HepG2 (cell line): ENCODE measurements at regions of chr2 and their contacts with region 1.

Region 1: GRCh38 chr2:43484323-43484930 is 111.4 kb downstream of the THADA start:
- DNase-seq: peak; percentile 85
- ATAC-seq: no peak
- H3K4me3 ChIP-seq: no peak overlapping the region
- H3K27ac ChIP-seq: no peak overlapping the region
- H3K4me1 ChIP-seq: peaks cover 15% of the 10 kb centered on the region; the same call in 1 of the 2 replicates
- H3K27me3 ChIP-seq: no peaks in the 10 kb centered on the region
- CTCF ChIP-seq: peak; percentile 79
- EP300 ChIP-seq: no peak
- POLR2A ChIP-seq: no peak
- RAD21 ChIP-seq: peak; percentile 84

Region 2: DNA sequence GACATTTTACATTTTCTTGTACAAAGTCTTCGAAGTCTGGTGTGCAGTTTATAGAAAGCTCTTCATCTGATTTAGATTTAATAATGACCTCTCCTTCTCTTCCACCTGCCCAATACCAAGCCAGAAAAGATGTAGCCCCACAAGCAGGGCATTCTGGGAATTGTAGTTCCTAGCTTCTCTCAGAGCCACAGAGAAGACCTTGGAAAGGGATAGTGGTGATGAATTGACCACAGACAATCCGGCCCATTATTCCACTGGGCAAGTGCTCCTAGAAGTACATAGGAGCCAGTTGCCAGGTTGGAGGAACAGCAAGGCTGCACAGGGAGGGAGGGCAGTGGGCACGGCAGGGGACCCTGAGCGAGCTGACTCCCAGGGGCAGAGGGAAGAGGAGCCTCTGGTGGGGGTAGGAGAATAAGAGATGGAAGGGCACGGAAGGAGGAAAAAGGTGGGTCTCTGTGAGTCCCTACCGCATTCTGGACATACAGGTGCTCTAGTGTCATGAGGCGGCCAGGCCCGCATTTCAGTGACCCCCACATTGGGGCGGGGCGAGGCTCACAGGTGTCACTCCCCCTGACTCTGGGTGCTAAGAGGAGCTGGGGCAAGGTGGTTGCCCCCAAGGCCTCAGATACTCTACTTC is 539.5 kb before region 1 on chr2:
- CTCF ChIA-PET with region 1: interaction called, 5 read pairs
- POLR2A ChIA-PET with region 1: no interaction called
- in situ Hi-C with region 1: loop called (anchors 5 kb)
- intact Hi-C with region 1: loop called (anchors 1 kb)
- DNase-seq: peak; percentile 59
- ATAC-seq: 0 out of 3 replicates have a peak, but pooled peaks have one; percentile 4
- H3K4me3 ChIP-seq: no peak overlapping the region
- H3K27ac ChIP-seq: no peak overlapping the region
- H3K4me1 ChIP-seq: peaks cover 95% of the 10 kb centered on the region
- H3K27me3 ChIP-seq: no peaks in the 10 kb centered on the region
- CTCF ChIP-seq: no peak
- EP300 ChIP-seq: no peak
- POLR2A ChIP-seq: no peak
- RAD21 ChIP-seq: no peak

Region 3: DNA sequence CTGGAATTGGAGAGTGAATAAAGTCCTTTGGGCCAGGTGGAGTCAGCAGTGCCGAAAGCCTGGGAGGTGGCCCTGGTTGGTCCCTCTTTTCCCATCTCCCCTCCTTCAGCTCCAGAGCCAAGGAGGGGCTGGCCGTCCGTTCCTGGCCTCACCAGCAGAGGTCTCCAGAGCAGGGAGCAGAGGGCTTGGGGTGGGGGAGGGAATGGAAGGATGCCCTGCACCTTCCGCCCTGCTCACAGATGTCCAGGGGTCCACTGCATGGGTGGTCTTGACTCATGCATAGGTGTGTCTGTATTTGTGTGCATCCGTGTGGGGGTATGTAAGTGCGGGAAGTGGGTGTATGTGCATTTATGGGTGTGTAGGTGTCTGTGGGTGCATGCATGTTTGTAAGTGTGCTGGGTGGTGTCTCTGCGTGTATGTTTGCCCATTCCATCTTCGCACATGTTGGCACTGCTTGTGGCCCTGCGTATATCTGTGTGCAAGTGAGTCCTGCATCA is 459.9 kb before region 1 on chr2:
- CTCF ChIA-PET with region 1: interaction called, 7 read pairs
- POLR2A ChIA-PET with region 1: no interaction called
- in situ Hi-C with region 1: loop called (anchors 10 kb)
- intact Hi-C with region 1: loop called (anchors 5 kb)
- DNase-seq: no peak
- ATAC-seq: peak; percentile 83
- H3K4me3 ChIP-seq: no peak overlapping the region
- H3K27ac ChIP-seq: no peak overlapping the region
- H3K4me1 ChIP-seq: peaks cover 60% of the 10 kb centered on the region
- H3K27me3 ChIP-seq: no peaks in the 10 kb centered on the region
- CTCF ChIP-seq: peak; percentile 98
- EP300 ChIP-seq: peak in 1 of 2 experiments; percentile 19; a peak in 1 of 4 replicates
- POLR2A ChIP-seq: no peak
- RAD21 ChIP-seq: peak; percentile 94

Region 4: DNA sequence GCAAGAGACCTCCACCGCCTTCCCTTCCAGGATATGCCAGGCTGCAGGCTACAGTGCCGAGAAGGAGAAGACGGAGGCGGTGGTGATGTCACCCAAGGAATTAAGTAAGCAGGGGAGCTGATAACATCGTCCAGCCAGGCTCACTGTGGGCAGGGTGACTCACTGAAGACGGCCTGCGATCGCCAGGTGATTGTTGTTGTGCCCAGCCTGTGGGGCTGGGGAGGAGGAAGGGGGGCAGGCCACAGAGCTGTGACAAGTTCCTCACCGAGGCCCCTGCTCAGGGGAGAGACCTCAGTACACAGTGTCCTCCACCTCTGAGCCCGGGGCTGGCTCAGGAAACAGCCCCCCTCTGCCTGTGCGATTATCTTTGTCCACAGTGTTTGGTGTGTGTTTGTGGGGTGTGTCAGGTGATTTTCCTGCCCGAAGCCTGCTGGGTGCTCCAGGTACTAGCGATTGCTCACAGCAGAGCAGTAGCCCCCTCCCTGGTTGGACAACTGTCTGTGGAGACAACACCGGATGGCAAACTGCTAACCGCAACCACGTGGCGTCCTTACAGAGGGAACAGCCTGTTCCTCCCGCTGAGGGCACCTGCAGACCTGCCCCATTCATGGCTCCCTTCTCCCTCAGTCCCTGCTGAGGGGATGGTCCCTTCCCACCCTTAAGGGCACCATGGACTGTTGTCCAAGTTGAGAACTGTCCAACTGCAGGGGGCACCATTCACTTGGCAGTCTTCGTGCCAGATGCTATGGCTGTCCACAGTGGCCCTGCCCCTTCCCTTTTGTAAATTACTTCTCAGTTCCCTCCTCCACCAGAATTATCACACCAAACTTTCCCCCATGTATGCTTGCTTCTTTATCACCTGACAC is 353.2 kb before region 1 on chr2:
- CTCF ChIA-PET with region 1: interaction called, 5 read pairs
- POLR2A ChIA-PET with region 1: no interaction called
- in situ Hi-C with region 1: loop called (anchors 5 kb)
- intact Hi-C with region 1: loop called (anchors 1 kb)
- DNase-seq: peak; percentile 80
- ATAC-seq: peak; percentile 68
- H3K4me3 ChIP-seq: peak overlapping the region in 1 of 3 experiments; percentile 34; a peak in 2 of 6 replicates
- H3K27ac ChIP-seq: peak overlapping the region; percentile 11
- H3K4me1 ChIP-seq: peaks cover 86% of the 10 kb centered on the region
- H3K27me3 ChIP-seq: no peaks in the 10 kb centered on the region
- CTCF ChIP-seq: peak; percentile 96
- EP300 ChIP-seq: peak in 1 of 2 experiments; percentile 15; a peak in 1 of 4 replicates
- POLR2A ChIP-seq: no peak
- RAD21 ChIP-seq: peak; percentile 97

Region 5: DNA sequence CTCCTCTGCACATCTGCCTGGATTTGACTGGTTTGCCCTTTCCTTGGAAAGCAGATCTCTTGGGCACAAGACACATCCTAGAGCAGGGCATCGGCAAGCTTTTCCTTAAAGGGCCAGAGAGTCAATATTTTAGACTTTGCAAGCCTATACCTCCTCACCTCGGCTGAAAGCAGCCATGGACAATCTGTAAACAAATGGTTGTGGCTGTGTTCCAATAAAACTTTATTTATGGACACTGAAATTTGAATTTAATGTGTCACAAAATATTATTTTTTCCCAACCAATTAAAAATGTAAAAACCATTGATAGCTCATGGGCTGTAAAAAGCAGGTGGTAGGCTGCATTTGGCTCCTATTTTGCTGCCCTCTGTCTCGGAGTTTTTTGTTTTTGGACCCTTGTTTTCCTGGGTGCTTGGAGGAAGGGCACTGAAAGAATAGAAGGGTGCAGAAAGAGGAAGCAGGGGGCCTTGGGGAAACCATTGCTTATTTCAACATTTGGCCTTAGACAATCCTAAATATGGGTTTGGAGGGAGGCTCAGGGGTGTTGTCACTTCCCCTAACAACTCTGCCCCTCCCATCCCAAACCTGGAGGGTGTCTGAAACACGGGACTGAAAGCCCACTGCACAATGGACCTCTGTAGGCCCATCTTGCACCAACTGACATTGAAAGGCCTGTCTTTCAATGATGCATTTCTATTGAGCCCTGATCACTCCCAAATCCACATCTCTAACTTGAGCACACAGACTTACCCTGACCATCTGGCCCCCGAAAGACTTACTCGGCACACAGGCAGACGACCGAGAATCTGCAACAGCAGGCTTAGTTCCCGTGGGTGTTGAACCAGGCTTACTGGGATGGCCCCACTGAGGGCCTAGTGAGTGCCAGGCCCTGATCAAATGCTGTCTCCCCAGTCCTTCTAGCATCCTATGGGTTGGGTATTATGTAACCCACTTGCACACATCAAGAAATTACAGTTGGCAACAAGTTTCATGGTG is 250.9 kb before region 1 on chr2:
- CTCF ChIA-PET with region 1: interaction called, 17 read pairs
- POLR2A ChIA-PET with region 1: no interaction called
- in situ Hi-C with region 1: loop called (anchors 5 kb)
- intact Hi-C with region 1: loop called (anchors 1 kb)
- DNase-seq: no peak
- ATAC-seq: no peak
- H3K4me3 ChIP-seq: no peak overlapping the region
- H3K27ac ChIP-seq: no peak overlapping the region
- H3K4me1 ChIP-seq: peaks cover 36% of the 10 kb centered on the region
- H3K27me3 ChIP-seq: no peaks in the 10 kb centered on the region
- CTCF ChIP-seq: no peak
- EP300 ChIP-seq: no peak
- POLR2A ChIP-seq: no peak
- RAD21 ChIP-seq: no peak

Region 6: DNA sequence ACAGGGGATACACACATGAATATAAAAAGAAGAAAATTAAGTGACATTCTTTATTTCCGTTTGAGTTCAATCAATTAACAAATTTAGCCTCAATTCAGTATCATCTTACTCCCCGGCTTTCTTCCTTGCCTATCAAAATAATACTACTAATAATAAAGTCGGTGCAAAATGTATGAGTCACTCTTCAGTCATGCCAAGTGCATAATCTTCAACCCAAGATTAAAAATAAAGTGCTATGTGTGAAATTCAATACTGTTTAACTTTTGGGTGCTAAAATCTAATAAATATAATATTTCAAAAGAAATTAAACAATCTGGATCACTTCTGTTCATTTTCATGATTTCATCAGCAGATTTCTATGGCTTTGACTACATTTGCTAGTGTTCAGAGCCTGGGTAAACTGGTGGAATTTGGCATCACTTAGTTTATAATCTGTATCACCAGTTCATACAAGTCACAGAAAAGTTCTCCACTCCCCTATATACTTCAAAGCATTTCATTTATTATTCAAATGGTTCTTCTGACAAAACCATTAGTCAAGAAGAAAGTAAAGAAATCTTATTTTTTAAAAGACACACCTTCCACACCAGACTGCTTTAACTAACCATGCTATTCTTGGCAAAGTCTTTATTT is 72.2 kb before region 1 on chr2:
- CTCF ChIA-PET with region 1: no interaction called
- POLR2A ChIA-PET with region 1: no interaction called
- in situ Hi-C with region 1: no loop called
- intact Hi-C with region 1: no loop called
- DNase-seq: no peak
- ATAC-seq: no peak
- H3K4me3 ChIP-seq: no peak overlapping the region
- H3K27ac ChIP-seq: no peak overlapping the region
- H3K4me1 ChIP-seq: peaks cover 39% of the 10 kb centered on the region
- H3K27me3 ChIP-seq: no peaks in the 10 kb centered on the region
- CTCF ChIP-seq: no peak
- EP300 ChIP-seq: no peak
- POLR2A ChIP-seq: no peak
- RAD21 ChIP-seq: no peak

Region 7: GRCh38 chr2:43438858-43439655 is 45.4 kb before region 1 on chr2:
- CTCF ChIA-PET with region 1: no interaction called
- POLR2A ChIA-PET with region 1: no interaction called
- in situ Hi-C with region 1: no loop called
- intact Hi-C with region 1: no loop called
- DNase-seq: no peak
- ATAC-seq: no peak
- H3K4me3 ChIP-seq: no peak overlapping the region
- H3K27ac ChIP-seq: no peak overlapping the region
- H3K4me1 ChIP-seq: peaks cover 33% of the 10 kb centered on the region
- H3K27me3 ChIP-seq: no peaks in the 10 kb centered on the region
- CTCF ChIP-seq: no peak
- EP300 ChIP-seq: no peak
- POLR2A ChIP-seq: no peak
- RAD21 ChIP-seq: no peak

Region 8: DNA sequence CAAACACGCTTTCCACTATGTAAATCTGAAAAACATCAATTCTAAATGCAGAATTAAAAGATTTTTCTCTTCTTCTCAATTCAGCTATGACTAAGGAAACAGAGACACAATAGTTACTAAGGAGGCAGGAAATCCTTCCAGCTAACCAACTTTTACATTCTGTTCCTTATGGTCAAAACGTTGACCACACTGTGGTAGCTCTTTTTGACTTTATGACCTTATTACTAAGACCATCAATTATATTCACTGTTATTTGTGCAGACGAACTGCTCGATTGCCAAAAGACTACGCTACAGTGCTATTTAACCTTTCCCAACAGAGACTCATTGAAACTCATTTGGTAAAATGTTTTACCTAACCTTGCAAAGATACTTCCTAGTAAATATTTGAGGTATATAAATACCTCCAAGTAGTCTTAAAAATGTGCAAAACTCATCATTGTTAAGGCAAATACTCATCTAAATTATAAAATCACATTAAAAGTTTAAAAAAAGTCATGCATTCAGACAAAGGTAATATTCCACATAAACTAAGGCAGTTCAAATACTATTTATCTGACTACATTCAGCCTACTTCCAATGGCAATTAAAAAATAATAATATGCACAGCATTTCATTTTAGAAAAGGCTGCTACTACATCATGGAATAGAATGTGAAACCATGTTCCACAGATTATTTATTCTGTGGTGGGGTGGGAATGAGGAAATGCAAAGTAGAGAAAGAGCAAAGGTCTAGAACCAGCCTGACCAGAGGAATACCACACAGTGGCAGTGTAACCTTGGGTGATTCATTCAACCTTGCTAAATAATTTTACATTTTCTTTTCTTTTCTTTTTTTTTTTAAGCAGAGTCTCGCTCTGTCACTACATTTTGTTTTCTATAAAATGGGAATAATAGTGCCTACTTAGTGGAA is 28.4 kb before region 1 on chr2:
- CTCF ChIA-PET with region 1: interaction called, 14 read pairs
- POLR2A ChIA-PET with region 1: no interaction called
- in situ Hi-C with region 1: no loop called
- intact Hi-C with region 1: loop called (anchors 2 kb)
- DNase-seq: peak; percentile 91
- ATAC-seq: peak; percentile 95
- H3K4me3 ChIP-seq: no peak overlapping the region
- H3K27ac ChIP-seq: peak overlapping the region; percentile 62
- H3K4me1 ChIP-seq: peaks cover 99% of the 10 kb centered on the region
- H3K27me3 ChIP-seq: no peaks in the 10 kb centered on the region
- CTCF ChIP-seq: peak; percentile 71
- EP300 ChIP-seq: peak in 1 of 2 experiments; percentile 77; a peak in 2 of 4 replicates
- POLR2A ChIP-seq: no peak
- RAD21 ChIP-seq: peak; percentile 27; the same call in 1 of the 2 replicates